ENCODE measurements at regions of chr17 and their contacts with region 1.

Region 1: GRCh38 chr17:7989781-7990655 is 12.4 kb upstream of the GUCY2D start:
- DNase-seq: peak; percentile 93
- ATAC-seq: peak; percentile 94
- H3K4me3 ChIP-seq: peak overlapping the region in 4 of 5 experiments; percentile 65 to 70 (median 68)
- H3K4me3 Mint-ChIP-seq: peak overlapping the region; percentile 80
- H3K27ac ChIP-seq: peak overlapping the region; percentile 27 to 49
- H3K27ac Mint-ChIP-seq: peak overlapping the region; percentile 86
- H3K4me1 ChIP-seq: peaks cover 8 to 19% of the 10 kb centered on the region in 2 donors
- H3K4me1 Mint-ChIP-seq: peaks cover 23% of the 10 kb centered on the region
- H3K27me3 ChIP-seq: peaks cover 0 to 6% (median 0%) of the 10 kb centered on the region in 4 experiments
- H3K27me3 Mint-ChIP-seq: peaks cover 8% of the 10 kb centered on the region
- CTCF ChIP-seq: peak; percentile 99

Region 2: GRCh38 chr17:7610641-7611040 is 379.4 kb before region 1 on chr17:
- CTCF ChIA-PET with region 1: no interaction called
- POLR2A ChIA-PET with region 1: no interaction called
- intact Hi-C with region 1: no loop called
- DNase-seq: no peak
- ATAC-seq: no peak
- H3K4me3 ChIP-seq: no peak overlapping the region
- H3K4me3 Mint-ChIP-seq: no peak overlapping the region
- H3K27ac ChIP-seq: no peak overlapping the region
- H3K27ac Mint-ChIP-seq: no peak overlapping the region
- H3K4me1 ChIP-seq: peaks cover 12 to 25% of the 10 kb centered on the region in 2 donors
- H3K4me1 Mint-ChIP-seq: peaks cover 29% of the 10 kb centered on the region
- H3K27me3 ChIP-seq: no peaks in the 10 kb centered on the region
- H3K27me3 Mint-ChIP-seq: no peaks in the 10 kb centered on the region
- CTCF ChIP-seq: no peak

Region 3: GRCh38 chr17:7740481-7741001 is 249.5 kb before region 1 on chr17:
- CTCF ChIA-PET with region 1: interaction called, 43 read pairs
- POLR2A ChIA-PET with region 1: no interaction called
- intact Hi-C with region 1: loop called (anchors 1 kb)
- DNase-seq: no peak
- ATAC-seq: no peak
- H3K4me3 ChIP-seq: no peak overlapping the region
- H3K4me3 Mint-ChIP-seq: no peak overlapping the region
- H3K27ac ChIP-seq: no peak overlapping the region
- H3K27ac Mint-ChIP-seq: peak overlapping the region; percentile 46
- H3K4me1 ChIP-seq: no peaks in the 10 kb centered on the region
- H3K4me1 Mint-ChIP-seq: no peaks in the 10 kb centered on the region
- H3K27me3 ChIP-seq: peaks cover 0 to 5% (median 0%) of the 10 kb centered on the region in 4 experiments
- H3K27me3 Mint-ChIP-seq: peaks cover 38% of the 10 kb centered on the region
- CTCF ChIP-seq: no peak

Region 4: GRCh38 chr17:7834962-7835813 is 154.8 kb before region 1 on chr17:
- CTCF ChIA-PET with region 1: interaction called, 21 read pairs
- POLR2A ChIA-PET with region 1: no interaction called
- intact Hi-C with region 1: no loop called
- DNase-seq: peak; percentile 96
- ATAC-seq: peak; percentile 44
- H3K4me3 ChIP-seq: peak overlapping the region; percentile 42 to 99 (median 95)
- H3K4me3 Mint-ChIP-seq: peak overlapping the region; percentile 99
- H3K27ac ChIP-seq: peak overlapping the region; percentile 93 to 100
- H3K27ac Mint-ChIP-seq: peak overlapping the region; percentile 97
- H3K4me1 ChIP-seq: peaks cover 38 to 56% of the 10 kb centered on the region in 2 donors
- H3K4me1 Mint-ChIP-seq: peaks cover 46% of the 10 kb centered on the region
- H3K27me3 ChIP-seq: peaks cover 0 to 13% (median under 1%) of the 10 kb centered on the region in 4 experiments
- H3K27me3 Mint-ChIP-seq: peaks cover 15% of the 10 kb centered on the region
- CTCF ChIP-seq: peak; percentile 86

Region 5: DNA sequence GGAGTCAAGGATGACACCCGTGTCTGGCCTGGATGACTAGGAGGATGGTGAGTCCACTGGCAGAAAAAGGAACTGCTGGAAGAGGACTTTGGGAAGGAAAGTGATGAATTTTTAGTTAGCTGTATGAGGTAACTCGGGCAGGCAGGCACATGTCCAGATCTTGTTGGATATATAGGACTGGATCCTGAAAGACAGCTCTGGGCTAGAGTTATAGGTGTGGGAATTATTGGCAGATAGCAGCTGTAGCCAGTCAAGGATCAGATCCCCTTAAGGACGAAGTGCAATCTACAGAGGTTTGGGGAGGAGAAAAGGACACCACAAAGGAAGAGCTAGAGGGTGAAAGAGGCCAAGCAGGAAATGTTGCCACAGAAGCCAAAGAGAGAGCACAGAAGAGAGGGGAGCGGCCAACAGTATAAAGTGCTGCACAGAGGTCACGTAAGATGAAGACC is 122.1 kb before region 1 on chr17:
- CTCF ChIA-PET with region 1: interaction called, 144 read pairs
- POLR2A ChIA-PET with region 1: no interaction called
- intact Hi-C with region 1: no loop called
- DNase-seq: no peak
- ATAC-seq: no peak
- H3K4me3 ChIP-seq: no peak overlapping the region
- H3K4me3 Mint-ChIP-seq: no peak overlapping the region
- H3K27ac ChIP-seq: no peak overlapping the region
- H3K27ac Mint-ChIP-seq: no peak overlapping the region
- H3K4me1 ChIP-seq: peaks cover 5% of the 10 kb centered on the region in 2 donors
- H3K4me1 Mint-ChIP-seq: peaks cover 8% of the 10 kb centered on the region
- H3K27me3 ChIP-seq: no peaks in the 10 kb centered on the region
- H3K27me3 Mint-ChIP-seq: no peaks in the 10 kb centered on the region
- CTCF ChIP-seq: no peak

Region 6: GRCh38 chr17:7931709-7932482 is 58.1 kb before region 1 on chr17 and contains the starts of genes CNTROB and TRAPPC1:
- CTCF ChIA-PET with region 1: interaction called, 48 read pairs
- POLR2A ChIA-PET with region 1: interaction called, 6 read pairs
- intact Hi-C with region 1: no loop called
- DNase-seq: peak; percentile 100
- ATAC-seq: peak; percentile 98
- H3K4me3 ChIP-seq: peak within 1 kb of the TSS; percentile 75 to 98 (median 89)
- H3K4me3 Mint-ChIP-seq: peak within 1 kb of the TSS; percentile 95
- H3K27ac ChIP-seq: peak within 1 kb of the TSS; percentile 77 to 88
- H3K27ac Mint-ChIP-seq: peak within 1 kb of the TSS; percentile 95
- H3K4me1 ChIP-seq: peaks cover 18 to 33% of the 10 kb centered on the region in 2 donors
- H3K4me1 Mint-ChIP-seq: peaks cover 44% of the 10 kb centered on the region
- H3K27me3 ChIP-seq: no peaks in the 10 kb centered on the region
- H3K27me3 Mint-ChIP-seq: no peaks in the 10 kb centered on the region
- CTCF ChIP-seq: no peak
- total RNA-seq, gene CNTROB: 34.8 and 40.4 TPM in 2 replicates
- total RNA-seq, gene TRAPPC1: 86.0 and 118 TPM in 2 replicates

Region 7: DNA sequence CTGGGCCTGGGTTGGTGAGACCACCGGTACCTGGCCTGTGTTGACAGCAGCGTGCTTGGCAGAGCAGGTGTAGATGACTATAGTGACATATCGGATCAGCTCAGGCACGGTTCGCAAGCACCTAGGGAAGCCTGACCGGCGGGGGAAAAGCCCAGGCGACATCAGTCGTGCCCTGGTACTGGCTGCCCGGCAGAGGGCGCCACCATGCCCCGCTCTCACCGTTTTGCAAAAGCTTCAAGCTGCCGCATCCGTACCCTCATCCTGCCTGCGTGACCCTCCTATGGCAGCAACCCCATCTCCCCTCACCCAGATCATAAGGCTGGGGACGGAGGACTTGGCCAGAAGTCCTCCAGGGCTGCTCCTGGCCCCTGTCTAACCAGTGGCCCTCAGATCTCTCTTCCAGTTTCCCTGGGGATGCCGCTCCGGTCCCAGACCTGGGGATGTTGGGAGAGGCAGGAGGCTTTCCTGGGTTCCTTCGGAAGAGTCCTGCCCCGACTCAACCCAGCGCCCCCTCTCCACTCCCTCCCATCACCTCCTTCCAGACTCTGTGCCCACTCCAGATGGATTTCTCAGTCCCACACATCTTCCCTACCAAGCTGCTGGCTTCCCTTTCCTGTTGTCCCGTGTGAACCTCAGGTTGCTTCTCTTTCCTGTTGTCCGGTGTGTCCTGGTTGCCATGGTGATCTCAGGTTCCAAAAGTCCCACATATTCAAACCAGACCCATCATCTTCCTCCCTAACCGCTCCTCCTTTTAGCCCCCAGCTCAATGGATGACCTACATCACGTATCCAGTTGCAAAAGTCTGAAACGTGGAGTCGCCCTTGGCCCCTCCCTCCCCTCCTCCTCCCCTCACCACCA is 83.8 kb after region 1 on chr17:
- CTCF ChIA-PET with region 1: interaction called, 10 read pairs
- POLR2A ChIA-PET with region 1: no interaction called
- intact Hi-C with region 1: no loop called
- DNase-seq: peak; percentile 95
- ATAC-seq: peak; percentile 95
- H3K4me3 ChIP-seq: peak overlapping the region in 1 of 5 experiments; percentile 34
- H3K4me3 Mint-ChIP-seq: peak overlapping the region; percentile 81
- H3K27ac ChIP-seq: no peak overlapping the region
- H3K27ac Mint-ChIP-seq: peak overlapping the region; percentile 57
- H3K4me1 ChIP-seq: peaks cover 28 to 29% of the 10 kb centered on the region in 2 donors
- H3K4me1 Mint-ChIP-seq: peaks cover 27% of the 10 kb centered on the region
- H3K27me3 ChIP-seq: peaks cover 0 to 57% (median 39%) of the 10 kb centered on the region in 4 experiments
- H3K27me3 Mint-ChIP-seq: peaks cover 46% of the 10 kb centered on the region
- CTCF ChIP-seq: peak; percentile 95

Region 8: GRCh38 chr17:8649157-8650118 is 659.4 kb after region 1 on chr17:
- CTCF ChIA-PET with region 1: no interaction called
- POLR2A ChIA-PET with region 1: no interaction called
- intact Hi-C with region 1: no loop called
- DNase-seq: no peak
- ATAC-seq: no peak
- H3K4me3 ChIP-seq: no peak overlapping the region
- H3K4me3 Mint-ChIP-seq: no peak overlapping the region
- H3K27ac ChIP-seq: no peak overlapping the region
- H3K27ac Mint-ChIP-seq: no peak overlapping the region
- H3K4me1 ChIP-seq: no peaks in the 10 kb centered on the region
- H3K4me1 Mint-ChIP-seq: no peaks in the 10 kb centered on the region
- H3K27me3 ChIP-seq: peaks cover 0 to 11% (median 0%) of the 10 kb centered on the region in 4 experiments
- H3K27me3 Mint-ChIP-seq: peaks cover 57% of the 10 kb centered on the region
- CTCF ChIP-seq: no peak